Gastrocnemius medialis (tissue), 4 donors: ENCODE measurements at regions of chr16 and their contacts with region 1.

Region 1: DNA sequence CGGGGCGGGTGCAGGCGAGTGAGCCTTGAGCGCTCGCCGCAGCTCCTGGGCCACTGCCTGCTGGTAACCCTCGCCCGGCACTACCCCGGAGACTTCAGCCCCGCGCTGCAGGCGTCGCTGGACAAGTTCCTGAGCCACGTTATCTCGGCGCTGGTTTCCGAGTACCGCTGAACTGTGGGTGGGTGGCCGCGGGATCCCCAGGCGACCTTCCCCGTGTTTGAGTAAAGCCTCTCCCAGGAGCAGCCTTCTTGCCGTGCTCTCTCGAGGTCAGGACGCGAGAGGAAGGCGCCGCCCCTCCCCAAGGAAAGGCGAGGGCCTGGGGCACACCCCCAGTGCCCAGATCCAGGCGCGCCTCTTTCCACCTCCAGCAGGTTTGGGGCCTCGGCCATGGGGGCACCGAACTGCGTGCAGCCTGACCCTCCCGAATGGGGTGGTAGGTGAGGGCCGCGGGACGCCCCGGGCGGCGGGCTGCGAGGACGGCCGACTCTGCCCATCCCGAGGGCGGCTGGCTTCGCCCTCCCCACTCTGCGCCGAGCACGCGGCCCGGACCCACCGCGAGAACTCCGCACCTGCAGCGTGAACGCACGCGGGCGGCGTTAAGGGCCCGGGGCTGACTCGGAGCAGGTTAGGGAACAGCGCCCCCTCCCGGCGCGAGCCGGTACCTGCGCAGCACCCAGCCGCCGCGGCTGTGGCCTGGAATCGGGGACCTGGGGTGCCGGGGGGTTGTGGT is 844 bp downstream of the HBQ1 start:
- DNase-seq: peak; percentile 26 to 54
- ATAC-seq: peak; percentile 32 to 80
- H3K4me3 ChIP-seq: peak overlapping the region; percentile 6 to 52 (median 20)
- H3K27ac ChIP-seq: no peak overlapping the region
- H3K4me1 ChIP-seq: peaks cover 8 to 10% of the 10 kb centered on the region in 2 donors
- H3K27me3 ChIP-seq: peaks cover 40 to 44% (median 43%) of the 10 kb centered on the region in 3 donors
- CTCF ChIP-seq: peak; percentile 94 to 99 (median 94)
- POLR2A ChIP-seq: no peak

Region 2: GRCh38 chr16:106623-107324 is 74.3 kb before region 1 on chr16:
- in situ Hi-C with region 1: loop called in 2 of 4 experiments (anchors 5 kb)
- intact Hi-C with region 1: loop called (anchors 2 kb)
- DNase-seq: peak; percentile 49
- ATAC-seq: peak in 1 of 2 donors; percentile 11
- H3K4me3 ChIP-seq: no peak overlapping the region
- H3K27ac ChIP-seq: no peak overlapping the region
- H3K4me1 ChIP-seq: peaks cover 30 to 32% of the 10 kb centered on the region in 2 donors
- H3K27me3 ChIP-seq: no peaks in the 10 kb centered on the region
- CTCF ChIP-seq: peak; percentile 70 to 88 (median 81)
- POLR2A ChIP-seq: no peak